GM12878 (cell line): ENCODE measurements at regions of chr5 and their contacts with region 1.

Region 1: DNA sequence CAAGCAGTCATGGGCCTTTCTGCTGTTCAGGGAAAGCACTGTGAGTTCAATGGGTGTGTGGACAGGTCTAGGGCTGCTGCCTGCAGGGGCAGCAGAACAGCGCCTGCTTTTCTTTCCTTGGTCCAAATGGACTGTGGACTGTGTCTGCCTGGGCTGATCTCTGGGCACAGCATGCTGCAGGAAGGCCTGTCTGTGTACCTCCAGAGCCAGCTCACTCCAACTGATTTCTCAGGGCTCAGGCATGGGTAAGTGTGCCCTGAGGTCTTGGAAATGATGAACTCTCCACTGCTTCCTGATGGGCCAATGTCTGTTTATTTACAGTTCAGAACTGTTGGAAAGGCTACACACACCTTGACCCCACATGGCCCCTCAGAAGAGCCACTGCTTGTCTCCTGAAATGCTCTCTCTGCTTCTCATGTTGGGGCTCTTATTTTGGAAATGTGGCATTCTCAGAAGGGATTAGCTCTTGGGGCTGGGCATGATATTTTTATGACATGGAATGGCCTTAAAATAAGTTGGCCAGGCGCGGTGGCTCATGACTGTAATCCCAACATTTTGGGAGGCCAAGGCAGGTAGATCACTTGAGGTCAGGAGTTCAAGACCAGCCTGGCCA is 27.0 kb downstream of the SLC22A4 start:
- DNase-seq: no peak
- ATAC-seq: no peak
- H3K4me3 ChIP-seq: no peak overlapping the region
- H3K27ac ChIP-seq: no peak overlapping the region
- H3K4me1 ChIP-seq: no peaks in the 10 kb centered on the region
- H3K27me3 ChIP-seq: peaks cover 0 to 2% of the 10 kb centered on the region in 2 experiments; a peak in 1 of 4 replicates
- CTCF ChIP-seq: no peak
- EP300 ChIP-seq: no peak
- POLR2A ChIP-seq: no peak
- RAD21 ChIP-seq: no peak

Region 2: GRCh38 chr5:132334812-132335211 is 13.6 kb after region 1 on chr5:
- CTCF ChIA-PET with region 1: interaction called, 7 read pairs
- POLR2A ChIA-PET with region 1: interaction called, 4 read pairs
- RAD21 ChIA-PET with region 1: interaction called, 4 read pairs
- SMC1A ChIA-PET with region 1: interaction called, 10 read pairs
- in situ Hi-C with region 1: no loop called
- intact Hi-C with region 1: no loop called
- DNase-seq: no peak
- ATAC-seq: peak; percentile 78
- H3K4me3 ChIP-seq: no peak overlapping the region
- H3K27ac ChIP-seq: no peak overlapping the region
- H3K4me1 ChIP-seq: no peaks in the 10 kb centered on the region
- H3K27me3 ChIP-seq: no peaks in the 10 kb centered on the region
- CTCF ChIP-seq: no peak
- EP300 ChIP-seq: no peak
- POLR2A ChIP-seq: no peak
- RAD21 ChIP-seq: no peak